Lower leg skin (tissue), 4 donors: ENCODE measurements at regions of chr2 and their contacts with region 1.

Region 1: GRCh38 chr2:238358769-238359168 is 38.5 kb downstream of the TRAF3IP1 start:
- DNase-seq: no peak
- H3K4me3 ChIP-seq: no peak overlapping the region
- CTCF ChIP-seq: no peak
- POLR2A ChIP-seq: no peak

Region 2: GRCh38 chr2:238589591-238590460 is 231.1 kb after region 1 on chr2:
- intact Hi-C with region 1: loop called (anchors 5 kb)
- DNase-seq: peak; percentile 11 to 82
- H3K4me3 ChIP-seq: no peak overlapping the region
- CTCF ChIP-seq: no peak
- POLR2A ChIP-seq: no peak